ENCODE measurements at regions of chr2 and their contacts with region 1.

Region 1: GRCh38 chr2:38581193-38582147 is 21.3 kb downstream of the HNRNPLL start:
- DNase-seq: peak in 3 of 5 donors; percentile 63 to 73 (median 66)
- H3K4me3 ChIP-seq: no peak overlapping the region
- H3K4me3 Mint-ChIP-seq: no peak overlapping the region
- H3K27ac ChIP-seq: no peak overlapping the region
- H3K27ac Mint-ChIP-seq: peak overlapping the region in 7 of 8 donors; percentile 9 to 92 (median 56)
- H3K4me1 ChIP-seq: peaks cover 8% of the 10 kb centered on the region
- H3K4me1 Mint-ChIP-seq: peaks cover 31 to 64% (median 64%) of the 10 kb centered on the region in 3 donors
- H3K27me3 ChIP-seq: no peaks in the 10 kb centered on the region
- H3K27me3 Mint-ChIP-seq: no peaks in the 10 kb centered on the region

Region 2: GRCh38 chr2:38568724-38569436 is 12.6 kb before region 1 on chr2:
- CTCF ChIA-PET with region 1: interaction called, 10 read pairs
- POLR2A ChIA-PET with region 1: no interaction called
- DNase-seq: no peak
- H3K4me3 ChIP-seq: no peak overlapping the region
- H3K4me3 Mint-ChIP-seq: no peak overlapping the region
- H3K27ac ChIP-seq: no peak overlapping the region
- H3K27ac Mint-ChIP-seq: peak overlapping the region in 1 of 8 donors; percentile 10
- H3K4me1 ChIP-seq: no peaks in the 10 kb centered on the region
- H3K4me1 Mint-ChIP-seq: peaks cover 11 to 28% (median 27%) of the 10 kb centered on the region in 3 donors
- H3K27me3 ChIP-seq: no peaks in the 10 kb centered on the region
- H3K27me3 Mint-ChIP-seq: no peaks in the 10 kb centered on the region

Region 3: GRCh38 chr2:38685116-38685735 is 103.8 kb after region 1 on chr2:
- CTCF ChIA-PET with region 1: interaction called, 10 read pairs
- POLR2A ChIA-PET with region 1: interaction called, 8 read pairs
- DNase-seq: no peak
- H3K4me3 ChIP-seq: no peak overlapping the region
- H3K4me3 Mint-ChIP-seq: peak overlapping the region in 6 of 7 donors; percentile 29 to 61 (median 46)
- H3K27ac ChIP-seq: no peak overlapping the region
- H3K27ac Mint-ChIP-seq: peak overlapping the region; percentile 61 to 97 (median 89)
- H3K4me1 ChIP-seq: peaks cover 30% of the 10 kb centered on the region
- H3K4me1 Mint-ChIP-seq: peaks cover 37 to 70% (median 69%) of the 10 kb centered on the region in 3 donors
- H3K27me3 ChIP-seq: no peaks in the 10 kb centered on the region
- H3K27me3 Mint-ChIP-seq: no peaks in the 10 kb centered on the region

Region 4: GRCh38 chr2:38720613-38721241 is 139.3 kb after region 1 on chr2:
- CTCF ChIA-PET with region 1: interaction called, 128 read pairs
- POLR2A ChIA-PET with region 1: no interaction called
- DNase-seq: no peak
- H3K4me3 ChIP-seq: no peak overlapping the region
- H3K4me3 Mint-ChIP-seq: peak overlapping the region in 3 of 7 donors; percentile 4 to 12 (median 6)
- H3K27ac ChIP-seq: no peak overlapping the region
- H3K27ac Mint-ChIP-seq: peak overlapping the region; percentile 65 to 94 (median 84)
- H3K4me1 ChIP-seq: peaks cover 19% of the 10 kb centered on the region
- H3K4me1 Mint-ChIP-seq: peaks cover 42 to 64% (median 58%) of the 10 kb centered on the region in 3 donors
- H3K27me3 ChIP-seq: no peaks in the 10 kb centered on the region
- H3K27me3 Mint-ChIP-seq: no peaks in the 10 kb centered on the region

Region 5: DNA sequence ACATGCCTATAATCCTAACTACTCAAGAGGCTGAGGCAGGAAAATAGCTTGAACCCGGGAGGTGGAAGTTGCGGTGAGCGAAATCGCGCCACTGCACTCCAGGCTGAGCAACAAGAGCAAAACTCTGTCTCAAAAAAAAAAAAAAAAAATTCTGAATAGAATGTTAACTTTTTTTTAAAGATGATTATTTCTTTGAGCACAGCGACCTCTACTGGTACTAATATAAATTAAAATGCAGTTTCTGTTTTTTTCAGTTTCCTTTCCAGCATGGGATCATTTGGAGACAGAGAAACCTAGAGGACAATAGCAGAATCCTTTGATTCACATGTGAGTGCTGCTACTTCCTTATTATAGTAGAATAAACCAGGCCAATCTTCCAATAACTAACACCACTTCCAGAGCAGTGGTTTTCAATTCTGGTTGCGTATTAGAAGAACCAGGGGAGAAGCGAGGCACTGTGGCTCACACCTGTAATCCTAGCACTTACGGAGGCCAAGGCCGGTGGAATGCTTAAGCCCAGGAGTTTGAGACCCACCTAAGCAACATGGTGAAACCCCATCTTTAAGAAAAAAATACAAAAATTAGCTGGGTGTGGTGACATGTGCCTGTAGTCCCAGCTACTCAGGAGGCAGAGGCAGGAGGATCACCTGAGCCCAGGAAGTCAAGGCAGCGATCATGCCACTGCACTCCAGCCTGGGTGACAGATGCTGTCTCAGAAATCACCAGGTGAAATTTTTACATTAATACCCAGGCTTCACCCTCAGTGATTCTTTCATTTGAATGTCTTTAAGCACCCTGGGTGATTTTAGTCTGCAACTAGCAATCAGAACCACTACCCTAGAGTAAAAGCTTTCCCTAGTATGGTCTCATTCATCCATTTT is 159.6 kb after region 1 on chr2:
- CTCF ChIA-PET with region 1: interaction called, 26 read pairs
- POLR2A ChIA-PET with region 1: interaction called, 9 read pairs
- DNase-seq: peak in 3 of 5 donors; percentile 49 to 62 (median 54)
- H3K4me3 ChIP-seq: no peak overlapping the region
- H3K4me3 Mint-ChIP-seq: peak overlapping the region in 5 of 7 donors; percentile 12 to 68 (median 47)
- H3K27ac ChIP-seq: no peak overlapping the region
- H3K27ac Mint-ChIP-seq: peak overlapping the region; percentile 18 to 99 (median 82)
- H3K4me1 ChIP-seq: peaks cover 26% of the 10 kb centered on the region
- H3K4me1 Mint-ChIP-seq: peaks cover 47 to 70% (median 69%) of the 10 kb centered on the region in 3 donors
- H3K27me3 ChIP-seq: no peaks in the 10 kb centered on the region
- H3K27me3 Mint-ChIP-seq: no peaks in the 10 kb centered on the region